ENCODE measurements at regions of chr6 and their contacts with region 1.

Region 1: DNA sequence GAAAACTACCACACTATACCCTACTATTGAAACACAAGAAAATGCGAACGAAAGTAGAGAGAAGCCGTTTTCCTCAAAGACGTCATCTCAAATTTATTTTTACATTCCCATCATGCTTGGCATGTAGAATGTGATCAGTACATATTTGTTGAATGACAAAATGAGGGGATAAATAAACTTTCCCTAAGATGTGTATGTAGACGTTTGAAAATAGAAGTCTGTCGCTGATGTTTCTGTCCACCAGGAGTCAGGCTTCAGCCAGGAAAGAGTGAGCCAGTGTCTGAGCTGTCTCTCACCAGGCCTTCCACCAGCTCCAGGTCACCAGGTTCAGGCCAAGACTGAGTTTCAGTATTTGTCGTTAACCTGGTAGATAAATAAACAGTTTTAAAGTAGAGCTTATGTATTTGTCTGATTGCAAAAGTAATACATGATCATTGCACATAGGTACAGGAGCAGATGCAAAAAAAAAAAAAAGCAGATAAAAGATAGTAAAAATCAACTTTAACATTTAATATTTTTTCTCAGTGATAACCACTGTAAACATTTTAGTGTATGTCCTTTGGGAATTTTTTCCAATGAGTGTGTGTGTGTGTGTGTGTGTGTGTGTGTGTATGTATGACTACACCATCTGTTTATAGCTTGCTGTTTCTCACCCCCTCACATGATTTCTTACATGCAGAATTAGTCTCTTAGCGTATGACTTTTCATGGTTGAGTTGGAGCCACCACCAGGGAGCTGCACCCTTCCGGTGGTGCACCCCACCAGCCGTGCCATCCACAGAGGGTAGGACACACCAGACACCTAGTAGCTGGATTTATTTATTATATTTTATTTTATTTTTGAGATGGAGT is 26.2 kb downstream of the WRNIP1 start:
- DNase-seq: peak; percentile 77
- H3K4me3 ChIP-seq: no peak overlapping the region
- H3K27ac ChIP-seq: peak overlapping the region; percentile 71 to 82 (median 75)
- H3K4me1 ChIP-seq: peaks cover 9 to 33% (median 14%) of the 10 kb centered on the region in 4 donors
- H3K27me3 ChIP-seq: no peaks in the 10 kb centered on the region
- CTCF ChIP-seq: peak; percentile 66 to 91 (median 72)
- EP300 ChIP-seq: no peak
- POLR2A ChIP-seq: no peak

Region 2: GRCh38 chr6:2841264-2842138 is 50.2 kb after region 1 on chr6 and contains the start of gene SERPINB1:
- in situ Hi-C with region 1: loop called in 2 of 4 experiments (anchors 10 kb)
- intact Hi-C with region 1: no loop called
- DNase-seq: peak; percentile 95
- H3K4me3 ChIP-seq: peak within 1 kb of the TSS; percentile 39 to 78 (median 62)
- H3K27ac ChIP-seq: peak within 1 kb of the TSS; percentile 95 to 99 (median 97)
- H3K4me1 ChIP-seq: peaks cover 20 to 59% (median 42%) of the 10 kb centered on the region in 4 donors
- H3K27me3 ChIP-seq: no peaks in the 10 kb centered on the region
- CTCF ChIP-seq: no peak
- EP300 ChIP-seq: peak; percentile 72
- POLR2A ChIP-seq: peak; percentile 96
- total RNA-seq, gene SERPINB1: 22.3 to 140 (median 88.4) TPM

Measured in transverse colon (tissue), 4 donors.